GM23248 (cell line): ENCODE measurements at regions of chr5 and their contacts with region 1.

Region 1: DNA sequence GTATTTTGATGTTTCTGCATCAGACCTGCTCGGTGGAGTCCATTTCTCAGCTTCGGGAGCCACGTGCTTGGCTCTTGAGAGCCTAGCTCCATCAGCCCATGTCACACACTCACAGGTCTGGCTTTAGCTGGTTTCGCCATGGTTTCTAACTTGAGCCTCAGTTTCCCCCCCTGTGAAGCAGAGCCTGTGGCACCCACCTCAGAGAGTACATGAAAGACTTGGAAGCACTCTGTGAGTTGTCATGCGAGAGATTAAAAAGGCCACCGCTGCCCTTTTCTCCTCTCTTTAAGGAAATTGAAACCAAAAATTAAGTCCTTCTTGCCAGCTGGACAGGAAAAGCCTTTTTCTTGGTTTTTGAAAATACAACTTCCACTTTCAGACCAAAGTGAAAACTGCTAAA is 8.8 kb downstream of the TENT4A start:
- DNase-seq: peak; percentile 66
- H3K4me3 ChIP-seq: peak overlapping the region; percentile 71
- H3K27ac ChIP-seq: peak overlapping the region; percentile 77
- H3K4me1 ChIP-seq: peaks cover 19% of the 10 kb centered on the region
- H3K27me3 ChIP-seq: no peaks in the 10 kb centered on the region

Region 2: GRCh38 chr5:5481206-5481605 is 1240.8 kb before region 1 on chr5:
- in situ Hi-C with region 1: loop called (anchors 10 kb)
- DNase-seq: no peak
- H3K4me3 ChIP-seq: no peak overlapping the region
- H3K27ac ChIP-seq: no peak overlapping the region
- H3K4me1 ChIP-seq: peaks cover 8% of the 10 kb centered on the region; the same call in 1 of the 2 replicates
- H3K27me3 ChIP-seq: no peaks in the 10 kb centered on the region